ENCODE measurements at regions of chr7 and their contacts with region 1.

Region 1: DNA sequence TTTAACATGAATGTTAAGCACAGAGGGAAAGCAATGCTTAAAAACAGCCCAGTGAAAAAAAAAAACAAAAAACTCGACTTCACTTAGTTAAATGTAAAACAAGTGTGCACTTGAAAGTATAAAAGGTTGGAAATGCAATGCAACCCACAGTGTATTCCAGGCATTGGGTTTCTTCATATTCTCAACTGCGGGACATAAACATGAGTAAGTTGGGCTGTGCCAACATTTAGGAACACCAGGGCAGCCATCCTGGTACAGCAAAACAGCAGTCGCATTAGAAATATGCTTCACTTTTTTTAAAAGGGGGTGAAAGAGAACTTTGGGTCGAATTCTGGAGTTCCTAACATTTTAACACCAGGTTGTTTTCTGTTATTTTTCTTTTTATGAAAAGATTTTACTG is 937 bp downstream of the STEAP1 start:
- DNase-seq: no peak
- H3K4me3 ChIP-seq: peak overlapping the region; percentile 77; the same call in 1 of the 2 replicates
- H3K27ac ChIP-seq: no peak overlapping the region
- H3K4me1 ChIP-seq: peaks cover 17% of the 10 kb centered on the region
- H3K27me3 ChIP-seq: no peaks in the 10 kb centered on the region
- CTCF ChIP-seq: no peak

Region 2: DNA sequence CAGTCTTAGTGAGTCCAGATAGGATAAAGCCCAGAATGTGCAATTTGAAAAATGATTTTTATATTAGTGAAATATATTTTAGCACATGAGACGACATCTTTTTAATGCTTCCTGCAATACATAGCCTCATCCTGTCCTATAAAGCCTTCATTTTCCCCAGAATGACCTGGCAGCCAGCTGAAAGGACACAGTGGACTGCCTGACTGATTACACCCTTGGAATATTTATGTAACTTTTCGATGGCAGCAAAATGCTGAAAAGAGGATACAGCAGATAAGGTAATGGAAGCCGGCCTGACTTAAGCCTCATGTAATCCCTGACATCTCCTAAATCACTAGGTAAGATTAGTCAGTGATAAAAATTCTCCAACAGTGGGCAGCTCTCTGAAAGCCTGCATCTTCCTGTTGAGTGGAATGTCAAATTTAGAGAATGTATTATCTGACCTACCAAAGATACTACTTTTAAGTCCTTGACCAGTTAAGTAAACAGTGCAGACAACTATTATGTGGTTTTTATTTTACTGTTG is 211.6 kb before region 1 on chr7:
- CTCF ChIA-PET with region 1: no interaction called
- POLR2A ChIA-PET with region 1: no interaction called
- intact Hi-C with region 1: no loop called
- DNase-seq: no peak
- H3K4me3 ChIP-seq: no peak overlapping the region
- H3K27ac ChIP-seq: no peak overlapping the region
- H3K4me1 ChIP-seq: no peaks in the 10 kb centered on the region
- H3K27me3 ChIP-seq: no peaks in the 10 kb centered on the region
- CTCF ChIP-seq: no peak

Region 3: DNA sequence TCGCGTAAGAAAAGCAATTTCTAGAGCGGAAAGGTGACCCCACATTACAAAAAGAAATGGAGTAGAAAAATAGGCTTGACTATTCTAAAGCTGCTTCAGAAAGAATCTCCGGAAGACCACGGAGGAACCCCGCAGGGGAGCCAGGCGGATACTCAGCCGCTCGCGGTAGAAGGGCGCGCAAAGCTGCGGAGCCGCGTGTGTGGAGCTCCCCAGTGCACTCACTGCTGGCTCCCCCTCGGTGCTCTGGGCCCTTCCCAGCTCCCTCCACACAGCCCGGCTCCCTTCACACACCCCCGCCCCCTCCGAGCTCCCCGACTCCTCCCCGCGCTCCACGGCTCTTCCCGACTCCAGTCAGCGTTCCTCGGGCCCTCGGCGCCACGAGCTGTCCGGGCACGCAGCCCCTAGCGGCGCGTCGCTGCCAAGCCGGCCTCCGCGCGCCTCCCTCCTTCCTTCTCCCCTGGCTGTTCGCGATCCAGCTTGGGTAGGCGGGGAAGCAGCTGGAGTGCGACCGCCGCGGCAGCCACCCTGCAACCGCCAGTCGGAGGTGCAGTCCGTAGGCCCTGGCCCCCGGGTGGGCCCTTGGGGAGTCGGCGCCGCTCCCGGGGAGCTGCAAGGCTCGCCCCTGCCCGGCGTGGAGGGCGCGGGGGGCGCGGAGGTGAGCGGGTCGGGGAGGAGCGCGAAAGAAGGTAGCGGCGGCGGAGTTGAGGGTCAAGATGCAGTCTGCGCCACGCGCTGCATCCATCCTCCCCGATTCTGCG is 56.4 kb after region 1 on chr7 and contains the start of gene STEAP2:
- CTCF ChIA-PET with region 1: interaction called, 5 read pairs
- POLR2A ChIA-PET with region 1: no interaction called
- intact Hi-C with region 1: loop called (anchors 1 kb)
- DNase-seq: peak; percentile 77 to 93
- H3K4me3 ChIP-seq: peak within 1 kb of the TSS; percentile 94
- H3K27ac ChIP-seq: peak within 1 kb of the TSS; percentile 31; the same call in 1 of the 2 replicates
- H3K4me1 ChIP-seq: peaks cover 9% of the 10 kb centered on the region
- H3K27me3 ChIP-seq: no peaks in the 10 kb centered on the region
- CTCF ChIP-seq: peak; percentile 65
- total RNA-seq, gene STEAP2: 10.1 and 10.4 TPM in 2 replicates

Region 4: GRCh38 chr7:90262438-90262837 is 107.2 kb after region 1 on chr7:
- CTCF ChIA-PET with region 1: no interaction called
- POLR2A ChIA-PET with region 1: no interaction called
- intact Hi-C with region 1: loop called (anchors 1 kb)
- DNase-seq: no peak
- H3K4me3 ChIP-seq: no peak overlapping the region
- H3K27ac ChIP-seq: no peak overlapping the region
- H3K4me1 ChIP-seq: no peaks in the 10 kb centered on the region
- H3K27me3 ChIP-seq: no peaks in the 10 kb centered on the region
- CTCF ChIP-seq: peak; percentile 73

Region 5: DNA sequence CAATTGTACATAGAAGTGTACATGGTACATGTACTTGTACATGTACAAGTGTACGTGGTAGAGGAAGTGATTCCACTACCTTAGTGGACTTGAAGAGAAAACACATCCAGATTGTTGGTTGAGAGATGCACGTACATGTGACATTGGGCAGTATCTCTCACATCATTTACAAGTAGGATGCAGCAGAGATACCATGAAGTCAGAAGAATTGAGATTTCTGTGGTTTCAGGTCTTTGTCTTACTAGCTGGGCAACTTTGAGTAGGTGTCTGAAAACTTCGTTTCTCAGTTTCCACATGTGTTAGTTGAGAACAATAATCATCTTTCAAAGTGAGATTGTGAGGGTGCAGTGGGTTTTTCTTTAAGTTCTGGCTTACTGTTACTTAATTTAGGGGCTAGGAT is 269.5 kb after region 1 on chr7:
- CTCF ChIA-PET with region 1: interaction called, 3 read pairs
- POLR2A ChIA-PET with region 1: no interaction called
- intact Hi-C with region 1: loop called (anchors 1 kb)
- DNase-seq: no peak
- H3K4me3 ChIP-seq: no peak overlapping the region
- H3K27ac ChIP-seq: no peak overlapping the region
- H3K4me1 ChIP-seq: 0 out of 2 replicates have a peak, but pooled peaks cover 8% of the 10 kb centered on the region
- H3K27me3 ChIP-seq: no peaks in the 10 kb centered on the region
- CTCF ChIP-seq: no peak

Region 6: GRCh38 chr7:91034459-91035368 is 879.5 kb after region 1 on chr7:
- CTCF ChIA-PET with region 1: no interaction called
- POLR2A ChIA-PET with region 1: no interaction called
- intact Hi-C with region 1: loop called (anchors 5 kb)
- DNase-seq: peak in 1 of 2 experiments; percentile 42
- H3K4me3 ChIP-seq: no peak overlapping the region
- H3K27ac ChIP-seq: no peak overlapping the region
- H3K4me1 ChIP-seq: no peaks in the 10 kb centered on the region
- H3K27me3 ChIP-seq: no peaks in the 10 kb centered on the region
- CTCF ChIP-seq: peak; percentile 53

Measured in PC-9 (cell line).